ENCODE measurements at regions of chr13 and their contacts with region 1.

Region 1: GRCh38 chr13:27424246-27425157 is at the start of gene GTF3A:
- DNase-seq: peak; percentile 86
- H3K4me3 Mint-ChIP-seq: peak within 1 kb of the TSS; percentile 89
- H3K27ac Mint-ChIP-seq: peak within 1 kb of the TSS; percentile 94
- H3K4me1 Mint-ChIP-seq: peaks cover 36% of the 10 kb centered on the region
- H3K27me3 Mint-ChIP-seq: no peaks in the 10 kb centered on the region
- total RNA-seq, gene GTF3A: 251 and 253 TPM in 2 replicates

Region 2: DNA sequence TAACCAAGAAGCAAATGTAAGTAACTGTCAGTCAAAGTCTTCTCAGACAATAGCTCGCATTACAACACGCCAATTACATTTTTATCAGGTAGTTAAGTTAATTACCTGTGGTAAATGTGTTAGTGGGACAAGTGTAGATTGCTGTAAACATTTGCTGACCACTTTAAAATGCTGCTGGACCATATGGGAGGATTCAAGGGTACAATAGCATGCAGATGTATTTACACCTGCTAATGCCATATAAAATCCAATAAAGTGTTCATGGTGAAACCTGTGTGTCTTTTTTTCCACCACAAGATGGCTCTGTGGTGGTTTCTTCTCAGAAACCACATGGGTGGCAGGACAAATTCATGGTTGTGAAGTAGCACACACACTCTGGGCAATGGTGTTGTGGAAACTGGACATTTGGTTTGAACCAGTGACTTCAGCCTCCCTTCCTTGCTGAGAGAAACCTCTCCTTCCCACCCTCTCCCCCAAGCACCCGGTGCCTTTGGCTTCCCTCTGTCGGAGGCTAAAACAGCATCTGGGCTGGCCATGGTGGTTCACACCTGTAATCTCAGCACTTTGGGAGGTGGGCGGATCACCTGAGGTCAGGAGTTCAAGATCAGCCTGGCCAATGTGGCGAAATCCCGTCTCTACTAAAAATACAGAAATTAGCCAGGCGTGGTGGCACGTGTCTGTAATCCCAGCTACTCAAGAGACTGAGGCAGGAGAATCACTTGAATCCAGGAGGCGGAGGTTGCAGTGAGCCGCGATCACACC is 18.1 kb before region 1 on chr13:
- intact Hi-C with region 1: loop called (anchors 1 kb)
- DNase-seq: peak; percentile 25
- H3K4me3 Mint-ChIP-seq: no peak overlapping the region
- H3K27ac Mint-ChIP-seq: no peak overlapping the region
- H3K4me1 Mint-ChIP-seq: peaks cover 8% of the 10 kb centered on the region
- H3K27me3 Mint-ChIP-seq: peaks cover 23% of the 10 kb centered on the region

Region 3: DNA sequence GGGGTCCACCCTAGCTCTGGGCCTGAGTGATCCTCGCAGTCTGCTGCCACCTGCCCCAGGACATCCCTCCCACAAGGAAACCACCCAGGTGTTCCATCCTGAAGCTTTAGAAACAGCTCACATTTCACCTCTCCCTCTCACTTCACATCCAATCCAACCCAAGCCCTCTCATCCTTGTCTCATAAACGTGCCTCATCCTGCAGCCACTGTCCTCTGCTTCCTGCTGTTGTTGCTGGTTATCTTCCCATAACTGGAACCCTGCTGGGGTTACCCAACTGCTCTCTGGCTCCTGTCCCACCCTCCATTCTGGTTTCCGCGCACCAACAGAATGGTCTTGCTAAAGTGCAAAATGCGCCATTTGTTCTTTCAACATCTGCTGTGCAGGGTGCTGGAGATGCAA is 85.6 kb after region 1 on chr13:
- intact Hi-C with region 1: no loop called
- DNase-seq: no peak
- H3K4me3 Mint-ChIP-seq: no peak overlapping the region
- H3K27ac Mint-ChIP-seq: no peak overlapping the region
- H3K4me1 Mint-ChIP-seq: no peaks in the 10 kb centered on the region
- H3K27me3 Mint-ChIP-seq: peaks cover 11% of the 10 kb centered on the region

Region 4: DNA sequence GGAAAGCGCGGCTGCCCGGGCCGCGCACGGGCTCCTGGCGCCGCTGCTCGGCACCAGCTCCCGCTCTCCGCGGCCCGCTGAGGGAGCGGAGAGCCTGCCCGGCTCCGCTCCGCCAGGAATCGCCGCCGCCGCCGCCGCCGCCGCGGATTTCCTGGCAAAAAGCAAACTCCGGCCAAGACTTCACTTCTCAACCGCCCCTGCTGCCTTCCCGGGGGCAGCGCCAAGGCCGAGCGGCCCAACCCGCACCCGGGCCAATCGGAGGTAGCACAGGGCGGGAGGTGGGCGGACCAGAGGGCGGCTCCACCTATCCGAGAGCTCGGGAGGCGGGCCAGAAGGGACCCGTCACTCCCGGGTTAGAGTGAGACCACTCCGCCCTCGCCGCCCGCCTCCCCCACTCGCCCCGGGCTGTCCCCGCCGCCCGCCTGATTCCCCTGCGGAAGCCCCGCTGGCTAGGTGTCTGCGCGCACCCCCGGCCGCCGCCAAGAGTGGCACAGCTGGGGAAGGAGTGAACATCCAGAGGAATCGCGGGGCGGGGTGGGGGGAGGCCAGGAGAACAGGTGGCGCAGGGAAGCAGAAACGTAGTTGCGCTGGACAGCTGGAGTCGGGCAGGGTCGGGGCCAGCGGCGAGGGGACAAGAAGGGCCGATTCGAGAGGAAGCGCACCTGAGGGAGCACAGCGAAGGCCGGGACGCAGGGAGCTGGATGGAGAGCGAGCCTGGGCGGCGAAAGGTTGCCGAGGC is 196.0 kb after region 1 on chr13 and contains the start of gene LNX2:
- intact Hi-C with region 1: loop called (anchors 2 kb)
- DNase-seq: peak; percentile 95
- H3K4me3 Mint-ChIP-seq: peak within 1 kb of the TSS; percentile 90
- H3K27ac Mint-ChIP-seq: peak within 1 kb of the TSS; percentile 88
- H3K4me1 Mint-ChIP-seq: peaks cover 47% of the 10 kb centered on the region
- H3K27me3 Mint-ChIP-seq: no peaks in the 10 kb centered on the region
- total RNA-seq, gene LNX2: 5.2 and 5.4 TPM in 2 replicates